Naive thymus-derived CD8-positive, alpha-beta T cell (primary cell): ENCODE measurements at regions of chr1 and their contacts with region 1.

Region 1: DNA sequence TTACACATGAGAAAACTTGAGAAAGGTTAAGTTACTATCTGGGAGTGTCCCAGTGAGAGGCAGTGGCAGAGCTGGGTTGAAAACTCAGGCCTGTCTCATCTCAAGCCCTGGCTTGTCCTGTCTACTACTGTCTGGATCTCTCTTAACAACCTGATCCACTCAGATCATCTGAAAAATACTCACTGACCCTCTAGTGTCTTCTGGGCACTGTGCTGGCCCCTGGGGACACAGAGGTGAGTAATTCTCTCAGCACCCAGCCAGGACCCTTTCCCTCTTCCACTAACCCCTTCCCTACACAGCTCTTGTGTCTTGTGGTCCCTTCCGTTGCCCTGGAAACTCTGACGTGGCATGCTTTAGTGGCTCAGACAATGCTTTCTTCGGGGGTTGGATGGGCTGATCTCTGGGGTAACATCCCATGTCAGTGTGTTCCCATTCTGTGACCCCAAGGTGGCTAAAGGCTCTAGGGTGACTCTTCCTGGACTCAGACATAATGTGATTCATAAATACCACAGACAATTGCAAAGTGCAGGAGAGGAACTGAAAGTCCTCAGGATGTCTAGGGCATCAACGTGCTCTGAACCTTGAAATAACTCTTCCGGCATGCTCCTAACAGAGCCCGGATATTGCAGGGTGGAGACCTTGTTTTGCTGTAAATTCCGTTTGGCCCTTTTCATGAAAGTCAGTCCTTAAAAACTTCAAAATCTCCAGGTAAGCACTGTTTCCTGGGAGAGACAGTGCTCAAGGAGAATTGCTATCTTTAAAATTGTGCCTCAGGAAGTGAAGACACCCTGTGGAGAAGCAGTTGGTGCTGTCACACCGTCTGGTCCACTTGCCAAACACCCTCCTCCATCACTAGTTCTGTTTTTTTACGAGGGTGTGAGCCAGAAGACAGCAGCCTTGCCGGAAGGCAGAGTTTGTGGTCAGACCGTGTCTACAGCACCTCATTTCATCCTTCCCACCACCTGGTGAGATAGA is 4.0 kb downstream of the SHISAL2A start:
- DNase-seq: peak; percentile 36 to 89 (median 80)
- ATAC-seq: peak; percentile 66 to 71
- H3K4me3 Mint-ChIP-seq: peak overlapping the region; percentile 77 to 92 (median 86)
- H3K27ac Mint-ChIP-seq: peak overlapping the region; percentile 99 to 100 (median 100)
- H3K4me1 Mint-ChIP-seq: peaks cover 44 to 88% (median 85%) of the 10 kb centered on the region in 4 donors
- H3K27me3 Mint-ChIP-seq: no peaks in the 10 kb centered on the region

Region 2: GRCh38 chr1:52552505-52553361 is 84.3 kb before region 1 on chr1 and contains the start of gene TUT4:
- POLR2A ChIA-PET with region 1: interaction called, 67 read pairs
- DNase-seq: peak in 7 of 10 donors; percentile 61 to 88 (median 70)
- ATAC-seq: peak; percentile 51 to 55
- H3K4me3 Mint-ChIP-seq: peak within 1 kb of the TSS in 8 of 10 donors; percentile 62 to 86 (median 78)
- H3K27ac Mint-ChIP-seq: peak within 1 kb of the TSS; percentile 72 to 95 (median 87)
- H3K4me1 Mint-ChIP-seq: peaks cover 21 to 40% (median 38%) of the 10 kb centered on the region in 4 donors
- H3K27me3 Mint-ChIP-seq: no peaks in the 10 kb centered on the region
- polyA plus RNA-seq, gene TUT4: 31.6 to 40.9 (median 32.7) TPM

Region 3: DNA sequence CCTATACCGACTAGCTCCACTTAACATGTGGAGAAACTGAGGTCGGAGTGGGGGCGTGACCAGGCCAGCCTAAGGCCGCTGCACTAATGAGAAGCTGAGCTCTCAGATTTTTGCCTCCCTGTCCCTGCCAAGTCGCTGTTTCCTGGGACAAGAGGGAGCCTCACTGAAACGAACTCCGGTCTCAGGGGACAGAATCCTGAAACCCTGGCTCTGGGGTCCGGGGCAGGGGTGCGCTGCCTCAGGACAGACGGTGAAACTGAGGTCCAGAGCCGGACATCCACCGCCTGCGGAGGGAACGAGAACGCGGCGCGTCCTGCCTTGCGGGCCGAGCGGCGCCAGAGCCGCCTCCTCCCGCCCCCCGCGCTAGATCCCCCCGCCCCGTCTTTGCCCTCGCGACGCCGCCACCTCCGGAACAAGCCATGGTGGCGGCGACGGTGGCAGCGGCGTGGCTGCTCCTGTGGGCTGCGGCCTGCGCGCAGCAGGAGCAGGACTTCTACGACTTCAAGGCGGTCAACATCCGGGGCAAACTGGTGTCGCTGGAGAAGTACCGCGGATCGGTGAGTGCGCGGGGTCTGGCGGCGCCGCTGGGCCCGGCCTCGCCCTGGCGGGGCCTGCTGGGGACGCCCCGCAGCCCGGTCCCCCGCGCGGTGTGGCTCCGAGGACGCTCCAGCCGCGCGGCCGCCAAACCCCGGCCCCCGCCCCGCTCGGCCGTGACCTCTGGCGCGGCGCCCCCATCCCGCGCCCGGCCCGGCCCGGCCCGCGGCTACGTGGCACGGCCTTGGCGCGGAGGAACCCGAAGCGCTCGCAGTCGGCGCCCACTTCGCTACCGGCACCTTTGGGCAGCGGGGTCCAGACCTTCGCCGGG is 34.8 kb before region 1 on chr1 and contains the start of gene GPX7:
- POLR2A ChIA-PET with region 1: interaction called, 36 read pairs
- DNase-seq: peak; percentile 43 to 82 (median 64)
- ATAC-seq: peak; percentile 83 to 86
- H3K4me3 Mint-ChIP-seq: peak within 1 kb of the TSS; percentile 72 to 92 (median 89)
- H3K27ac Mint-ChIP-seq: peak within 1 kb of the TSS; percentile 84 to 97 (median 96)
- H3K4me1 Mint-ChIP-seq: peaks cover 26 to 55% (median 53%) of the 10 kb centered on the region in 4 donors
- H3K27me3 Mint-ChIP-seq: no peaks in the 10 kb centered on the region
- polyA plus RNA-seq, gene GPX7: 30.2 to 34.5 (median 30.3) TPM

Region 4: DNA sequence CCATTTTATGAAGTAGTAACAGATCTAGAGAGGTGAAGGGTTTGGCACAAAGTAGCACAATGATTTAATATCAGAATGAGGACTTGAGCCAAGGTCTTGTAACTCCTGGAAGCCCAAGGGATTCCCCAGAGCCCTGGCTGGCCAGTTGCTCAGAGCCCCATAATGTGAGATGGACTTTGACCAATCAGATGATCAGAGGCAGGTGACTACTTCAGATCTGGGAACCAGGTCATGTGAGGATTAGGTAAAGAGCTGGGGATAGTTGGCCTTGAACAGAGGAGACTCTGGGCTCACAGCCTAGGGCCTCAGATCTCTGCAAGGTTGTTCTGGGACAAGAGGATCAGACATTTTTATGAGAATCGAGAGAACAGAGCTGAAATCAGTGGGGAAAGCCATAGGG is 14.9 kb after region 1 on chr1:
- POLR2A ChIA-PET with region 1: interaction called, 33 read pairs
- DNase-seq: no peak
- ATAC-seq: no peak
- H3K4me3 Mint-ChIP-seq: no peak overlapping the region
- H3K27ac Mint-ChIP-seq: peak overlapping the region; percentile 6 to 83 (median 68)
- H3K4me1 Mint-ChIP-seq: peaks cover 15 to 46% (median 25%) of the 10 kb centered on the region in 4 donors
- H3K27me3 Mint-ChIP-seq: no peaks in the 10 kb centered on the region

Region 5: DNA sequence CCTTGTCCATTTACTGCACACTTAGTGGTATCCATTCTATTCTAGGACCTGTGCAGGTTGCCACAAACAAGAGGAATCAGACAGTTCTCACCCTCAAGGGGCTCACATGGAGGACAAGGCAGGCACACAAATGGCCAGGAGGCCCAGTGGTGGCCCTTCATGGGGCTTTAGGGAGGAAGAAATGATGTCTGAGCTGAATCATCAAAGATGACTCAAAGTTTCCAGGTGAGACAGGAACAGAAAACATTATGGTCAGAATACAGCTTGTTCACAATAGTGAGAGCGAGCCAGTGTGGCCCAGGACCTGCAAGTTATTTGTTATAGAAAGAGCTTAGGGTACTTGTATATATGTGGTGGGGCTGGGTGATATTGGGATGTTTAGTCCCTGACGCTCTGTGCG is 22.3 kb after region 1 on chr1:
- POLR2A ChIA-PET with region 1: interaction called, 33 read pairs
- DNase-seq: no peak
- ATAC-seq: no peak
- H3K4me3 Mint-ChIP-seq: no peak overlapping the region
- H3K27ac Mint-ChIP-seq: peak overlapping the region; percentile 51 to 86 (median 68)
- H3K4me1 Mint-ChIP-seq: peaks cover 9 to 33% (median 18%) of the 10 kb centered on the region in 4 donors
- H3K27me3 Mint-ChIP-seq: no peaks in the 10 kb centered on the region

Region 6: GRCh38 chr1:52683367-52683940 is 46.4 kb after region 1 on chr1:
- POLR2A ChIA-PET with region 1: interaction called, 12 read pairs
- DNase-seq: no peak
- ATAC-seq: no peak
- H3K4me3 Mint-ChIP-seq: no peak overlapping the region
- H3K27ac Mint-ChIP-seq: peak overlapping the region in 5 of 10 donors; percentile 32 to 73 (median 58)
- H3K4me1 Mint-ChIP-seq: peaks cover 8 to 17% (median 10%) of the 10 kb centered on the region in 4 donors
- H3K27me3 Mint-ChIP-seq: no peaks in the 10 kb centered on the region